Heart right ventricle (tissue), 16 donors: ENCODE measurements at regions of chr22 and their contacts with region 1.

Region 1: DNA sequence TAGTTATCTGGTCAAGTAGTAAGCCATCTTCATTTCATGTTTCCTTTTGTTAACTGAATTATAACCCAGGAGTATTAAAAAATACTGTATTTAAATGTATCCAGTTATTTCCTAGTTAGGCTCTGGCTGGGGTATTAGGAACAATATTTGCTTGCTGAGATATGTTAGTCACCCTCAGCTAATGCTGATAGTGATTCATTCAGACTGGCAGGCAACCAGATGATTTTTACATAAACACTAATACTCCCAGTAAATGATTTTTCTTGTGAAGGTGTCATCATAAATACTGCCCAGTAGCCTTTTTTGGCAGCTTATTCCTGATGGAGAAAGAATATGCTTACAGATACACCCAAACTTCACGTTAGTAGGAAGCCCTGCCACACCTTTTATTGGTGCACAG is 8.1 kb downstream of the YWHAH start:
- DNase-seq: no peak
- ATAC-seq: peak in 3 of 8 donors; percentile 25 to 70 (median 42)
- H3K4me3 ChIP-seq: no peak overlapping the region
- H3K27ac ChIP-seq: peak overlapping the region in 7 of 10 donors; percentile 41 to 83 (median 72)
- H3K4me1 ChIP-seq: peaks cover 20 to 83% (median 67%) of the 10 kb centered on the region in 9 donors
- H3K27me3 ChIP-seq: no peaks in the 10 kb centered on the region
- CTCF ChIP-seq: no peak

Region 2: DNA sequence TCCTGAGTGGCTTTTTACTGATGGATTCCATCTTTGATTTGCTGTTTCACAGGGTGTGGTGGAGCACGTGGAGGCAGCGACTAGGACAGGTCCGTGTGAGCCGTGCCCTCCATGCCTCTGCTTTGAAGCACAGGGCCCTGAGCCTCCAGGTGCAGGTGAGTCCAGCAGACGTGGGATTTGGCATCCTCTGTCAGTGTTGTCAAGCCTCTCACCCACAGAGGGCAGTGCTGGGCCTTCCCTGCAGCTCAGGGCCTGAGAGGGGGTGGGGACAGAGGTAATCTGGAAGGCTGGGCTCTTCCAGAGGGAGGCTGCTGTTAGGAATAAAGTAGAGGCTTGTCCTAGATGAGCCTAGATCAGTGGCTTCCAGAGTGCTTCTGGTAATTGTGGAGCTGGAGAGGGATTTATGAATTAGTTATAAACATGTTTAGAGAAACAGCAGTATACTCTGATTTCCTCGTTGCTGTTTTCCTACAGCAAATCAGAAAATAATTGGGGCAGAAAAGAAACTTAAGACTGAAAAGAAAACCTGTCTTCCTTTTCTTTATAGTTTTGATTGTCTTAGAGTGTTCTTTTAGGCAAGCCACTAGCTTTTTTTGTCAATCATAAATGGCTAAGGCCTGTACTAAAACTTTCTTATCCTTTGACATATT is 391.1 kb before region 1 on chr22:
- intact Hi-C with region 1: loop called in 1 of 10 experiments (anchors 10 kb)
- DNase-seq: peak; percentile 62 to 74
- ATAC-seq: peak; percentile 79 to 96 (median 90)
- H3K4me3 ChIP-seq: no peak overlapping the region
- H3K27ac ChIP-seq: no peak overlapping the region
- H3K4me1 ChIP-seq: peaks cover 0 to 6% (median 0%) of the 10 kb centered on the region in 9 donors
- H3K27me3 ChIP-seq: no peaks in the 10 kb centered on the region
- CTCF ChIP-seq: peak; percentile 46 to 81 (median 73)

Region 3: GRCh38 chr22:31661851-31662656 is 290.4 kb before region 1 on chr22 and contains the start of gene PISD:
- intact Hi-C with region 1: loop called in 5 of 10 experiments (anchors 1 to 10 kb)
- DNase-seq: peak; percentile 95
- ATAC-seq: peak; percentile 98 to 100 (median 100)
- H3K4me3 ChIP-seq: peak within 1 kb of the TSS; percentile 56 to 99 (median 90)
- H3K27ac ChIP-seq: peak within 1 kb of the TSS in 9 of 10 donors; percentile 24 to 81 (median 62)
- H3K4me1 ChIP-seq: peaks cover 2 to 20% (median 14%) of the 10 kb centered on the region in 9 donors
- H3K27me3 ChIP-seq: no peaks in the 10 kb centered on the region
- CTCF ChIP-seq: no peak
- total RNA-seq, gene PISD: 16.3 to 30.0 (median 18.7) TPM

Region 4: GRCh38 chr22:31872209-31872608 is 80.2 kb before region 1 on chr22:
- intact Hi-C with region 1: loop called in 2 of 10 experiments (anchors 5 kb)
- DNase-seq: no peak
- ATAC-seq: no peak
- H3K4me3 ChIP-seq: no peak overlapping the region
- H3K27ac ChIP-seq: no peak overlapping the region
- H3K4me1 ChIP-seq: peaks cover 0 to 17% (median 0%) of the 10 kb centered on the region in 9 donors
- H3K27me3 ChIP-seq: no peaks in the 10 kb centered on the region
- CTCF ChIP-seq: peak in 5 of 9 donors; percentile 19 to 48 (median 29)

Region 5: DNA sequence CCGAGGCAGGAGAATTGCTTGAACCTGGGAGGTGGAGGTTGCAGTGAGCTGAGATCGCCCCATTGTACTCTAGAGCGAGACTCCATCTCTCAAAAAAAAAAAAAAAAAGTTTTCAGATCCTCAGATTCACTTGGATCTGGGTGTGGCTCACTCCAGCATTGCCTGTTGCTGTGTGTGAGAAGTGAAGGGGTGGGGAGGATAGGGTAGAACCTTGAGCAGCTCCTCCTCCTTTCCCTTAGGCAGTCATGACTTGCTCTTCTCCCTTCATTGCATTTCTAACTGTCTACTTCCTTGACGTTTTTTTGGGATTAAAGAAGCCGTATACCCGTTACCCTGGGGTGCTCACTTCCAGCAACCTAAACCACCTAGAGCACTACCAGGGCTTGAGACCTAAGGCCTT is 71.3 kb before region 1 on chr22:
- intact Hi-C with region 1: loop called in 1 of 10 experiments (anchors 2 kb)
- DNase-seq: no peak
- ATAC-seq: no peak
- H3K4me3 ChIP-seq: no peak overlapping the region
- H3K27ac ChIP-seq: no peak overlapping the region
- H3K4me1 ChIP-seq: no peaks in the 10 kb centered on the region
- H3K27me3 ChIP-seq: no peaks in the 10 kb centered on the region
- CTCF ChIP-seq: no peak